ENCODE measurements at regions of chr5 and their contacts with region 1.

Region 1: GRCh38 chr5:7815892-7816534 is 34.9 kb downstream of the CFAP90 start:
- DNase-seq: peak; percentile 95
- ATAC-seq: peak; percentile 94
- H3K4me3 Mint-ChIP-seq: no peak overlapping the region; the same call in 1 of the 2 replicates
- H3K27ac Mint-ChIP-seq: peak overlapping the region; percentile 89
- H3K4me1 Mint-ChIP-seq: peaks cover 29% of the 10 kb centered on the region
- H3K27me3 Mint-ChIP-seq: no peaks in the 10 kb centered on the region
- CTCF ChIP-seq: peak; percentile 82

Region 2: DNA sequence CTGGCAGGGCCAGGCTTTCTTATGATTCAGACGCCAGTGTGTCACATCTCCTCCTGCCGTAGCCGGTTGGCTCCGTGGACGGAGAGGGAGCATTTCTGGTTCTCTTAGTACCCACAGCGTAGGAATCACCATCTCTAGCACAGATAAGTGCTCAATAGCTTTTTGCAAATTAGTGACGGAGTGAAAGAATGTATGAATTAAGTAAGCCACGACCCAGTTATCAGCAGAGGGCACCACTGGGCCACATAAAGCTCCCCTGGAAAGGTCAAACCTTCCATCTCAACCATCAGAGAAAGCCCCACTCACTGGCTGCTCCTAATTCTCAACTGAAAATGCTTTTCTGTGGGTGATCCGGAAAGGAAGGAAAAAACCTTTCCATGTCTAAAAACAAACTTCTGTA is 737.1 kb before region 1 on chr5:
- CTCF ChIA-PET with region 1: interaction called, 13 read pairs
- POLR2A ChIA-PET with region 1: no interaction called
- DNase-seq: peak; percentile 50
- ATAC-seq: peak; percentile 68
- H3K4me3 Mint-ChIP-seq: peak overlapping the region; percentile 25; the same call in 1 of the 2 replicates
- H3K27ac Mint-ChIP-seq: 0 out of 2 replicates have a peak overlapping the region, but pooled peaks have one; percentile 12
- H3K4me1 Mint-ChIP-seq: peaks cover 50% of the 10 kb centered on the region
- H3K27me3 Mint-ChIP-seq: no peaks in the 10 kb centered on the region
- CTCF ChIP-seq: no peak

Region 3: GRCh38 chr5:7745882-7746610 is 70.0 kb before region 1 on chr5:
- CTCF ChIA-PET with region 1: interaction called, 11 read pairs
- POLR2A ChIA-PET with region 1: no interaction called
- DNase-seq: peak; percentile 88
- ATAC-seq: peak; percentile 96
- H3K4me3 Mint-ChIP-seq: no peak overlapping the region
- H3K27ac Mint-ChIP-seq: peak overlapping the region; percentile 96
- H3K4me1 Mint-ChIP-seq: peaks cover 7% of the 10 kb centered on the region
- H3K27me3 Mint-ChIP-seq: no peaks in the 10 kb centered on the region
- CTCF ChIP-seq: peak; percentile 92

Region 4: DNA sequence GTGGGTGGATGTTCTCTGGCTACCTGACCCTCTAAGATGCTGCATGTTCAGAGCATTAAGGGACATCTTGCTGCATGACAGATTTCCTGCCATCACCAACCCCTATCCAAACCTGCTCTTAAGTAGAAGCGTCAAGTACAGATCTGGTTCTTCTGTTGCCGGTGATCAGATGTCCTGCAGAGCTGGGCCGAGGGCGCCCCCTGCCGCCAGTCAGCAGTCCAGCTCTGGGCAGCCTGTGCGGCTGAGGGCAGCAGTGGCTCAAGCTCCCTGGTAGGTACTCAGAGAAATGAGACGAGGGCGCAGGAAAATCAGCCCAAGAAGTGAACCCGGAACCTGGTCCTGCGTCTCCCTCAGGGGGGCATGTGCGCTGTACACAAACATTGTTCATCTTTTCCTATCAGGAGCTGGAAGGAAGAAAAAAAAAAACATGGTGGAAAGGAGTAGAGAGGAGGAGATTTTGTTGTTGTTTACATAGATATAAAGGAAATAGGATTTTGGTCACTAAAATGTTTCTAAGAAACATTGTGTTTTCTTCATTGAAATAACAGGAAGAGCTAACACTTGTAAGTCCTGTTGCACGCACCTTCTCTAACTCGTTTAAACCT is 60.9 kb before region 1 on chr5:
- CTCF ChIA-PET with region 1: interaction called, 10 read pairs
- POLR2A ChIA-PET with region 1: no interaction called
- DNase-seq: peak; percentile 86
- ATAC-seq: peak; percentile 97
- H3K4me3 Mint-ChIP-seq: no peak overlapping the region
- H3K27ac Mint-ChIP-seq: peak overlapping the region; percentile 73
- H3K4me1 Mint-ChIP-seq: peaks cover 21% of the 10 kb centered on the region
- H3K27me3 Mint-ChIP-seq: no peaks in the 10 kb centered on the region
- CTCF ChIP-seq: peak; percentile 90

Region 5: DNA sequence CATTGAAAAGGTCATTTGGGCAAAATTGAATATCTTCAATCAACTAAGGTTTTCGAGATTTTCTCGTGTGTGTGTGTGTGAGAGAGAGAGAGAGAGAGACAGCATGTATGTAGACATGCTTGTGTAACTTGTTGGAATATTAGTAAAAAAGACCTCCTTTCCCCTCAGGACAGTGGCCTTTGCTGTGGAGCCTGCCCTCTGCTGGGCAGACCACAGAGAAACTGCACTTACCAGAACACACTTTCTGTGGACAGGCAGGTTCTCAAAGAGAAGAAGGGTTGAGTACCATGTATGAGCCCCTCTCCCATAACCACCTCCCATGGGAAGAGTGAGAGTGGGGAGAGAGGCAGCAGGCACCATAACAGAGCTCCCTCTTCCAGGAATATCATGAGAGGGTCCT is 10.6 kb before region 1 on chr5:
- CTCF ChIA-PET with region 1: interaction called, 10 read pairs
- POLR2A ChIA-PET with region 1: no interaction called
- DNase-seq: no peak
- ATAC-seq: peak; percentile 34
- H3K4me3 Mint-ChIP-seq: no peak overlapping the region
- H3K27ac Mint-ChIP-seq: no peak overlapping the region
- H3K4me1 Mint-ChIP-seq: no peaks in the 10 kb centered on the region
- H3K27me3 Mint-ChIP-seq: no peaks in the 10 kb centered on the region
- CTCF ChIP-seq: no peak

Region 6: GRCh38 chr5:7850395-7851239 is 34.6 kb after region 1 on chr5 and contains the start of gene CFAP90:
- CTCF ChIA-PET with region 1: interaction called, 28 read pairs
- POLR2A ChIA-PET with region 1: interaction called, 3 read pairs
- DNase-seq: peak; percentile 91
- ATAC-seq: peak; percentile 76
- H3K4me3 Mint-ChIP-seq: peak within 1 kb of the TSS; percentile 82
- H3K27ac Mint-ChIP-seq: 0 out of 2 replicates have a peak within 1 kb of the TSS, but pooled peaks have one; percentile 53
- H3K4me1 Mint-ChIP-seq: peaks cover 7% of the 10 kb centered on the region
- H3K27me3 Mint-ChIP-seq: peaks cover 65% of the 10 kb centered on the region
- CTCF ChIP-seq: no peak
- total RNA-seq, gene CFAP90: 0.21 to 0.64 TPM (median 0.33 TPM) in 3 replicates

Region 7: DNA sequence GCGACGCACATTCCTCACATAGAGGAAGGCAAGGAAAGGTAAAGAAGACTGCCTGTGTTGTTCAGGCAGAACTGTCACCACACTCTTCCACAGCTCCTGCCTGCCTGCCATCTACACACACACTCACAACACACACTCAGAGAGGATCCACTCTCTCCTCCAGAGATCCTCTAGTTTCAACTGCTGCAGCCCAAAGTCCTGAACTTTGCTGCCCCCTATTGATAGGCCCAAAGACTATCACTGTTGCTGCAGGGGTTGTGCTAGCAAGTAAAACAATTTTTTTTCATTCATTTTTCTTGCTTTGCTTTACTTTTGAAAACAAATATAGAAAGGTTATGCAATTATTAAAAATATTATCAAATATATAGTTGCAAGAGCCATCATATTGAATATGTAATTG is 40.8 kb after region 1 on chr5:
- CTCF ChIA-PET with region 1: interaction called, 22 read pairs
- POLR2A ChIA-PET with region 1: no interaction called
- DNase-seq: peak; percentile 56
- ATAC-seq: peak; percentile 94
- H3K4me3 Mint-ChIP-seq: no peak overlapping the region
- H3K27ac Mint-ChIP-seq: no peak overlapping the region
- H3K4me1 Mint-ChIP-seq: peaks cover 2% of the 10 kb centered on the region; the same call in 1 of the 2 replicates
- H3K27me3 Mint-ChIP-seq: peaks cover 16% of the 10 kb centered on the region
- CTCF ChIP-seq: peak; percentile 66